ENCODE measurements at regions of chr17 and their contacts with region 1.

Region 1: GRCh38 chr17:12256380-12256995 is 235.8 kb downstream of the MAP2K4 start:
- DNase-seq: peak; percentile 81
- ATAC-seq: peak; percentile 86
- H3K4me3 ChIP-seq: no peak overlapping the region
- H3K27ac ChIP-seq: no peak overlapping the region
- H3K4me1 ChIP-seq: peaks cover 7% of the 10 kb centered on the region
- H3K27me3 ChIP-seq: no peaks in the 10 kb centered on the region
- CTCF ChIP-seq: peak; percentile 93
- POLR2A ChIP-seq: peak; percentile 25; the same call in 1 of the 2 replicates
- RAD21 ChIP-seq: peak; percentile 93

Region 2: DNA sequence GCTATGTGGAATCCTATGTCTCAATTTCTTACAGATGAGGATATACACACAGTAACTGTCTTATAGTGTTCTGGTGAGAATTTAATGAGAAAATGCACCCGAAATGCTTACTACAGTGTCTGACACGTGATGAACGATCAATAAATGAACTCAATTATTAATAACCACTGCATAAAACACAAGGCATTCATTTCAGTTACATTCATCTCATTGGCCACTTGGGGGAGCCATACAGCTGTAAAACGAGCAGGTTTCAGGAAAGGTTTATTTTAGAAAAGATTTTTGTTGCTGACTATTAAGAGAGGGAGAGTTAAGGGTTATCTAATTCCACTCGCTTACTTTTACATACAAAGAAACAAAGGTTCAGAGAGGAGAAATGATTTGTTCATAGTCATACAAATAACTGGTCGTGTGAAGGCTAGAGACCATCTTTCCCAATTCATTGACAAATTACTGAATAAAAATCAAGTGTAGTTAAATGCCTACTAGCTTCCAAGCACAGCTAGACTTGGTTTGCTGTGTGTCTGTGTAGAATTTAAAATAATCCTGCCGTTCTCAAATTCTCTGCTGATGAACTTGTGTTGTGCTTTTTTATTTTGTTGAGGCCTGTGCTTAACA is 75.7 kb before region 1 on chr17:
- CTCF ChIA-PET with region 1: no interaction called
- POLR2A ChIA-PET with region 1: no interaction called
- dilution Hi-C with region 1: no loop called
- in situ Hi-C with region 1: no loop called
- intact Hi-C with region 1: loop called (anchors 1 kb)
- DNase-seq: peak; percentile 79
- ATAC-seq: peak; percentile 96
- H3K4me3 ChIP-seq: no peak overlapping the region
- H3K27ac ChIP-seq: no peak overlapping the region
- H3K4me1 ChIP-seq: no peaks in the 10 kb centered on the region
- H3K27me3 ChIP-seq: no peaks in the 10 kb centered on the region
- CTCF ChIP-seq: peak; percentile 90
- POLR2A ChIP-seq: 0 out of 2 replicates have a peak, but pooled peaks have one; percentile 30
- RAD21 ChIP-seq: peak; percentile 91

Region 3: GRCh38 chr17:12415031-12415430 is 158.5 kb after region 1 on chr17:
- CTCF ChIA-PET with region 1: no interaction called
- POLR2A ChIA-PET with region 1: no interaction called
- dilution Hi-C with region 1: no loop called
- in situ Hi-C with region 1: no loop called
- intact Hi-C with region 1: loop called (anchors 5 kb)
- DNase-seq: peak; percentile 94
- ATAC-seq: peak; percentile 95
- H3K4me3 ChIP-seq: no peak overlapping the region
- H3K27ac ChIP-seq: no peak overlapping the region
- H3K4me1 ChIP-seq: peaks cover 8% of the 10 kb centered on the region
- H3K27me3 ChIP-seq: no peaks in the 10 kb centered on the region
- CTCF ChIP-seq: no peak
- POLR2A ChIP-seq: no peak
- RAD21 ChIP-seq: peak; percentile 19

Region 4: DNA sequence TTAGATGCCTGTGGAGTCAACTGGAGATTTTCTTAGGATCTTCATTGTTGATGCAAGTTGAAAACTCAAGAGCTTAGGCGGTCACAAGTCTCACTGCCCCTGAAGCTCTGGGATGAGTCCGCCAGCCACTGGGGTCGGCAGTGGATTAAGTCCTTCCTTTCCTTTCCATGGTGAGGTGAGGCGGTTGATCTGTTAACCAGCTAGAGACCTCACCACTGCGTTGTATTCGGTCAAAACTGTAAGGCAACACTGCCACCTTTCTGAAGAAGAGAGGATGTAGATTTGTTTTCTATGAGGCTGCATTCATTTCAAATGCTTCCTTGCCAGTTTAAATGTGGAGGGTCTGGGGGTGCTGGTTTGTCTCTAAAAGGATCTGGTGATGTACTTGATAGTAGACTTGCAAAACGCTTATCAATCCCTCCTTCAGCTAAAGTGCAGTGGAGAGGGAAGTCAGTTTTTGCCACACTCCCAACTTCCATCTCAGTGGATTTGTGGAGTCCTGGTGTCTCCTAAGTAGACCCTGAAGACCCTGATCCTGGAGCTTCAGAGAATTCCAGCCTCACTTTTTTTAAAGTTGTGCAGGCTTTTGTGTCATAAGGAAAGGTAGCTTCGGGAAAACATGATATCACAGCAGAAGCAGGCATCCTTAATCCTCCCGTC is 410.9 kb after region 1 on chr17:
- CTCF ChIA-PET with region 1: interaction called, 11 read pairs
- POLR2A ChIA-PET with region 1: no interaction called
- dilution Hi-C with region 1: no loop called
- in situ Hi-C with region 1: loop called (anchors 5 kb)
- intact Hi-C with region 1: loop called (anchors 1 kb)
- DNase-seq: peak; percentile 89
- ATAC-seq: peak; percentile 63
- H3K4me3 ChIP-seq: peak overlapping the region; percentile 94
- H3K27ac ChIP-seq: peak overlapping the region; percentile 42
- H3K4me1 ChIP-seq: peaks cover 9% of the 10 kb centered on the region
- H3K27me3 ChIP-seq: no peaks in the 10 kb centered on the region
- CTCF ChIP-seq: peak; percentile 87
- POLR2A ChIP-seq: peak; percentile 46
- RAD21 ChIP-seq: peak; percentile 93

Region 5: GRCh38 chr17:12744298-12744697 is 487.8 kb after region 1 on chr17:
- CTCF ChIA-PET with region 1: no interaction called
- POLR2A ChIA-PET with region 1: no interaction called
- dilution Hi-C with region 1: no loop called
- in situ Hi-C with region 1: loop called (anchors 10 kb)
- intact Hi-C with region 1: loop called (anchors 1 kb)
- DNase-seq: peak; percentile 69
- ATAC-seq: peak; percentile 25
- H3K4me3 ChIP-seq: no peak overlapping the region
- H3K27ac ChIP-seq: no peak overlapping the region
- H3K4me1 ChIP-seq: peaks cover 11% of the 10 kb centered on the region
- H3K27me3 ChIP-seq: no peaks in the 10 kb centered on the region
- CTCF ChIP-seq: no peak
- POLR2A ChIP-seq: no peak
- RAD21 ChIP-seq: no peak

Measured in IMR-90 (cell line).